ENCODE measurements at regions of chr17 and their contacts with region 1.

Region 1: GRCh38 chr17:27293898-27294688 is at the start of gene WSB1:
- DNase-seq: peak; percentile 61
- ATAC-seq: peak; percentile 83
- H3K4me3 ChIP-seq: peak within 1 kb of the TSS; percentile 86
- H3K27ac ChIP-seq: peak within 1 kb of the TSS; percentile 97
- H3K4me1 ChIP-seq: peaks cover 11% of the 10 kb centered on the region
- H3K27me3 ChIP-seq: no peaks in the 10 kb centered on the region
- CTCF ChIP-seq: no peak
- EP300 ChIP-seq: peak; percentile 20 to 57; a peak in 2 of 4 replicates
- POLR2A ChIP-seq: peak; percentile 100
- RAD21 ChIP-seq: no peak
- polyA plus RNA-seq, gene WSB1: 26.6 to 49.8 TPM

Region 2: DNA sequence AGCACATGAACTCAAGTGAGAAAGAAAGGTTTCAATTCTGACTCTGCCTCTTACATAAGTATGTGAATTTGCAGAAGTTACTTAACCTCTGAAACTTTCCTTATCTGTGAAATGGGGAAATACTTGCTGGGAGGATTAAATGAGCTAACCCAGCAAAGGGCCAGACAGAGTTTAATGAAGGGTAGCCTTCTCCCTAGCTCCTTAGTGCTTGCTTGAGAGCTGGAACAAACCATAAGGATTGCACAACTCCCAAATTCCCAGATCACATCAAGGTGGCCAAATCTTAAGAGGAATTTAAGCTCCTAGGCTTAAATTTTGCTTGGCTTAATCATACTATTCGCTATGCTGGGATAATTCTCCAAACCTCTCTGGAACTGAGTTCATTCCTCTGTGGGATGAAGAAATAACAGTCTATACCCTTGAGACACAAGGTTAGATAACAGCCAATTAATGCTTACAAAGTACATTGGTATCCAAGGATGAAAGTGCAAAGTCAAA is 12.0 kb before region 1 on chr17:
- CTCF ChIA-PET with region 1: interaction called, 11 read pairs
- POLR2A ChIA-PET with region 1: interaction called, 26 read pairs
- RAD21 ChIA-PET with region 1: interaction called, 26 read pairs
- SMC1A ChIA-PET with region 1: interaction called, 16 read pairs
- in situ Hi-C with region 1: no loop called
- intact Hi-C with region 1: no loop called
- DNase-seq: peak; percentile 49
- ATAC-seq: peak; percentile 98
- H3K4me3 ChIP-seq: no peak overlapping the region
- H3K27ac ChIP-seq: peak overlapping the region; percentile 62
- H3K4me1 ChIP-seq: peaks cover 14% of the 10 kb centered on the region
- H3K27me3 ChIP-seq: no peaks in the 10 kb centered on the region
- CTCF ChIP-seq: no peak
- EP300 ChIP-seq: peak in 1 of 2 experiments; percentile 53; a peak in 1 of 4 replicates
- POLR2A ChIP-seq: no peak
- RAD21 ChIP-seq: no peak

Region 3: DNA sequence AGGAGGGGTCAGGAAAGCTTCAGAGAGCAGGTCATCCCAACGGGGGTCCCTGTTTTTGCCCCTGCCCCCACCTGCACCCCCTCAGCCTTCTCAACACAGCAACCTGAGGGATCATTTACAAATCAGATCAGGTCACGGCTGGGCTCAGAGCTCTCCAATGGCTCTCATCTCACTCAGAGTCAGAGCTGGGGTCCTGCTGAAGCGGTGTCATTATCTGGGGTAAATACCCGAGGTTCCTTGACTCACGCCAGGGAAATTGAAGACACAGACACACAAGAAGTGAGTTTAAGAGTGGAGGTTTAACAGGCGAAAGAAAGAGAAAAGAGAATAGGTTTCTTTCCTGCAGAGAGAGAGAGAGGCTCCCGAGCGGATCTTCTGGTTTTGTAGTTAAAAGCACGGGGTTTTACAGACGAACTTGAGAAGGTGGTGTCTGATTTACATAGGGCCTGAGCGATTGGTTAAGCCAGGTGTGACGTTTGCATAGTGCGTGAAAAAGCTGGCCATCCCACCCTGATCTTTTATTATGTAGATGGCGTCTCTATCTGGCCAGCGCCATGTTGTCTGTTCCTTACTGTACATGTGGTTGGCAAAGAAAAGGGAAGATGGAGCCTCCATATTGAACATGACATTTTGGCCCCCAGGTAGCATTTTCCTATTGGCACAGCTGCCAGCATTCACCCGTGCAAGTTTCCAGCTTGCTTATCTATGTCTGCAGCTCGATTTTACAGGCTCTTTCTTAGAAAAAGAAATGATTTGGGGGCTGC is 51.2 kb after region 1 on chr17:
- CTCF ChIA-PET with region 1: interaction called, 5 read pairs
- POLR2A ChIA-PET with region 1: interaction called, 4 read pairs
- RAD21 ChIA-PET with region 1: interaction called, 3 read pairs
- SMC1A ChIA-PET with region 1: no interaction called
- in situ Hi-C with region 1: no loop called
- intact Hi-C with region 1: loop called (anchors 5 kb)
- DNase-seq: no peak
- ATAC-seq: no peak
- H3K4me3 ChIP-seq: no peak overlapping the region
- H3K27ac ChIP-seq: no peak overlapping the region
- H3K4me1 ChIP-seq: peaks cover 17% of the 10 kb centered on the region
- H3K27me3 ChIP-seq: no peaks in the 10 kb centered on the region
- CTCF ChIP-seq: no peak
- EP300 ChIP-seq: no peak
- POLR2A ChIP-seq: no peak
- RAD21 ChIP-seq: no peak